SK-N-SH (cell line): ENCODE measurements at regions of chr11 and their contacts with region 1.

Region 1: GRCh38 chr11:13316528-13316961 is 39.0 kb downstream of the BMAL1 start:
- DNase-seq: no peak
- H3K4me3 ChIP-seq: no peak overlapping the region
- H3K27ac ChIP-seq: peak overlapping the region; percentile 52 to 72
- H3K4me1 ChIP-seq: peaks cover 6 to 31% of the 10 kb centered on the region in 2 experiments; a peak in 3 of 4 replicates
- H3K27me3 ChIP-seq: no peaks in the 10 kb centered on the region
- CTCF ChIP-seq: no peak
- EP300 ChIP-seq: no peak
- RAD21 ChIP-seq: no peak

Region 2: GRCh38 chr11:13297917-13298356 is 18.6 kb before region 1 on chr11:
- CTCF ChIA-PET with region 1: interaction called, 11 read pairs
- POLR2A ChIA-PET with region 1: no interaction called
- DNase-seq: no peak
- H3K4me3 ChIP-seq: no peak overlapping the region
- H3K27ac ChIP-seq: no peak overlapping the region; a peak in 1 of 4 replicates
- H3K4me1 ChIP-seq: peaks cover 0 to 35% of the 10 kb centered on the region in 2 experiments; a peak in 1 of 4 replicates
- H3K27me3 ChIP-seq: no peaks in the 10 kb centered on the region
- CTCF ChIP-seq: no peak
- EP300 ChIP-seq: no peak
- RAD21 ChIP-seq: no peak

Region 3: DNA sequence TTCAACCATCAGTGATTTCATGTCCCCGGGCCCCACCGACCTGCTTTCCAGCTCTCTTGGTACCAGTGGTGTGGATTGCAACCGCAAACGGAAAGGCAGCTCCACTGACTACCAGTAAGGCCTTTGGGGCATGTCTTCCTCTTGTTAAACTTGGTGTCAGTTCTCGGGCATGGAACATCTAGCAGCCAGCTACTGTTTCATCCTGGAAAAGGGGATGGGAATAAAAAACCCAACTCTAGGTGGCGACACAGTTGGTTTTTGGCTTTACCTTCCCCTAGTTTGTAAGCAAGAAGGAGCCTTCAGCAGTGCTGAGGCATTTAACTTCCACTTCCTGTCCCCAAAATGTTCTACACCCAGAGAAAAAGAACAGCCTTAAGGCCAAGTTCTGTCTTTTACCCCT is 37.8 kb after region 1 on chr11:
- CTCF ChIA-PET with region 1: no interaction called
- POLR2A ChIA-PET with region 1: no interaction called
- DNase-seq: no peak
- H3K4me3 ChIP-seq: no peak overlapping the region
- H3K27ac ChIP-seq: no peak overlapping the region
- H3K4me1 ChIP-seq: no peaks in the 10 kb centered on the region; a peak in 1 of 4 replicates
- H3K27me3 ChIP-seq: no peaks in the 10 kb centered on the region
- CTCF ChIP-seq: peak; percentile 43; the same call in 1 of the 2 replicates
- EP300 ChIP-seq: no peak
- RAD21 ChIP-seq: peak; percentile 15; the same call in 1 of the 2 replicates